PC-9 (cell line): ENCODE measurements at regions of chr16 and their contacts with region 1.

Region 1: GRCh38 chr16:3134564-3135417 is at the start of gene ZNF213:
- DNase-seq: peak; percentile 95 to 97
- H3K4me3 ChIP-seq: peak within 1 kb of the TSS; percentile 88
- H3K27ac ChIP-seq: peak within 1 kb of the TSS; percentile 68
- H3K4me1 ChIP-seq: peaks cover 14% of the 10 kb centered on the region
- H3K27me3 ChIP-seq: no peaks in the 10 kb centered on the region
- CTCF ChIP-seq: no peak
- total RNA-seq, gene ZNF213: 15.9 and 17.7 TPM in 2 replicates

Region 2: DNA sequence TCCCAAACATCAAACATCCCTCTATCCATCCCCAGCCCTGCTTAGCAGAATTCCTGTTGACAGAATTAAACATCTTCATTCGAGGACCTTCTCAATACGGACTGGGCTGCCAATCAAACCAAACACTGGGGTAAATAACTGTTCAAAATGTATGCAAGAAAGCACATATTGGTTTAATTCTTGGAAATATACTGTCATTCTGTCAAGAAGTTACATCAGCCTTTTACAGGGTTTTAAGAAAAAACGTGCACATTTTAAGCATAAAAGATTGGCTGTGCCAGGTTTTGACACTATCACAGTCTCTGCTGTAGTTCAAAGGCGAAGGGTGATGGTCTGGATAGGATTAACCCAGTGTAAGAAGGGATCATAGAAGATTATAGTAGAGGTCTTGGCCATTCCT is 730.7 kb before region 1 on chr16:
- CTCF ChIA-PET with region 1: no interaction called
- POLR2A ChIA-PET with region 1: no interaction called
- intact Hi-C with region 1: no loop called
- DNase-seq: no peak
- H3K4me3 ChIP-seq: no peak overlapping the region
- H3K27ac ChIP-seq: no peak overlapping the region
- H3K4me1 ChIP-seq: no peaks in the 10 kb centered on the region
- H3K27me3 ChIP-seq: 0 out of 2 replicates have a peak, but pooled peaks cover 7% of the 10 kb centered on the region
- CTCF ChIP-seq: no peak

Region 3: GRCh38 chr16:2964475-2965336 is 170.1 kb before region 1 on chr16:
- CTCF ChIA-PET with region 1: no interaction called
- POLR2A ChIA-PET with region 1: no interaction called
- intact Hi-C with region 1: no loop called
- DNase-seq: peak; percentile 66 to 93
- H3K4me3 ChIP-seq: peak overlapping the region; percentile 91
- H3K27ac ChIP-seq: no peak overlapping the region
- H3K4me1 ChIP-seq: peaks cover 5% of the 10 kb centered on the region; the same call in 1 of the 2 replicates
- H3K27me3 ChIP-seq: no peaks in the 10 kb centered on the region
- CTCF ChIP-seq: no peak

Region 4: GRCh38 chr16:3094289-3095027 is 40.3 kb before region 1 on chr16:
- CTCF ChIA-PET with region 1: interaction called, 38 read pairs
- POLR2A ChIA-PET with region 1: interaction called, 22 read pairs
- intact Hi-C with region 1: no loop called
- DNase-seq: peak in 1 of 2 experiments; percentile 31
- H3K4me3 ChIP-seq: no peak overlapping the region
- H3K27ac ChIP-seq: no peak overlapping the region
- H3K4me1 ChIP-seq: peaks cover 5% of the 10 kb centered on the region; the same call in 1 of the 2 replicates
- H3K27me3 ChIP-seq: no peaks in the 10 kb centered on the region
- CTCF ChIP-seq: peak; percentile 74

Region 5: GRCh38 chr16:3150346-3151218 is 15.8 kb after region 1 on chr16:
- CTCF ChIA-PET with region 1: interaction called, 4 read pairs
- POLR2A ChIA-PET with region 1: interaction called, 37 read pairs
- intact Hi-C with region 1: loop called (anchors 1 kb)
- DNase-seq: peak; percentile 91 to 99
- H3K4me3 ChIP-seq: peak overlapping the region; percentile 99
- H3K27ac ChIP-seq: peak overlapping the region; percentile 75
- H3K4me1 ChIP-seq: peaks cover 6% of the 10 kb centered on the region
- H3K27me3 ChIP-seq: no peaks in the 10 kb centered on the region
- CTCF ChIP-seq: no peak

Region 6: DNA sequence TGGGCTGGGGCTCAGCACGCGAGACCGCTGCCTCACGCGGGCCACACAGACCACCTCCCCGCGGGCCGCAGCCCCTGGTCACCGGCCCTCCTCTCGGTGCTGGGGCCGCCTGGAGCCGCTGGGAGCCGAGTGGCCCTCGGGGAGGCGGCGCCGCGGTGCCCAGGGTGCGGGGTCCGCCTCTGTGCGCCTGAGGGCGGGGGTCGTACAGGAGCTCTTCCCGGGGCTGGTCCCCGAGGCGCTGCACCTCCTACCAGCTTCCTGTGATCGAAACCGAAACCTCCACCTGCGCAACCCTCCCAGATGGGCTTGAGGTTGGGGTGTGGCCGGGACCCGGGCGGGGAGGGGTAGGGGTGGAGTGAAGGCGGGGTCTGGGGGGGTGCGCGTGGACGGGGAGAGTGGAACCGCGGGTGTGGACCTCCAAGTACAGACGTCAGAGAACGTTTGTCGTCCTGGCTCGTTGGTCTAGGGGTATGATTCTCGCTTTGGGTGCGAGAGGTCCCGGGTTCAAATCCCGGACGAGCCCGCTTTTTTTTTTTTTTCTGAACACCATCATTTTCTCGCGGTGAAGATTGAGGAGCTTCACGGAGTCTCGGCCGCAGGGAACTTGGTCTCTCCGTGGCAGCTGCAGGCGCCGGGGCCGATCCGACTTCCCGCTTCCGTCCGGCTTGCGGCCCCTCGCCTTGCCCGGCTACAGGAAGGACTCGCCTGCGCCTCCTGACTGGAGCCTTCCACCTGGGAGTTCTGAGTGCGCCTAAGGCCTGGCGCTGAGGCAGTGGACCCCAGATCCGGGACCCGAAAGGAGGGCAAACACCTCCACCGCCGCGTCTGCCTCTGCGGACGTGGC is 23.9 kb after region 1 on chr16:
- CTCF ChIA-PET with region 1: interaction called, 3 read pairs
- POLR2A ChIA-PET with region 1: interaction called, 10 read pairs
- intact Hi-C with region 1: no loop called
- DNase-seq: peak; percentile 82 to 95
- H3K4me3 ChIP-seq: peak overlapping the region; percentile 71
- H3K27ac ChIP-seq: peak overlapping the region; percentile 98
- H3K4me1 ChIP-seq: no peaks in the 10 kb centered on the region
- H3K27me3 ChIP-seq: no peaks in the 10 kb centered on the region
- CTCF ChIP-seq: no peak

Region 7: GRCh38 chr16:3165111-3165822 is 30.5 kb after region 1 on chr16:
- CTCF ChIA-PET with region 1: interaction called, 6 read pairs
- POLR2A ChIA-PET with region 1: interaction called, 10 read pairs
- intact Hi-C with region 1: loop called (anchors 5 kb)
- DNase-seq: no peak
- H3K4me3 ChIP-seq: no peak overlapping the region
- H3K27ac ChIP-seq: no peak overlapping the region
- H3K4me1 ChIP-seq: 0 out of 2 replicates have a peak, but pooled peaks cover 4% of the 10 kb centered on the region
- H3K27me3 ChIP-seq: no peaks in the 10 kb centered on the region
- CTCF ChIP-seq: no peak

Region 8: DNA sequence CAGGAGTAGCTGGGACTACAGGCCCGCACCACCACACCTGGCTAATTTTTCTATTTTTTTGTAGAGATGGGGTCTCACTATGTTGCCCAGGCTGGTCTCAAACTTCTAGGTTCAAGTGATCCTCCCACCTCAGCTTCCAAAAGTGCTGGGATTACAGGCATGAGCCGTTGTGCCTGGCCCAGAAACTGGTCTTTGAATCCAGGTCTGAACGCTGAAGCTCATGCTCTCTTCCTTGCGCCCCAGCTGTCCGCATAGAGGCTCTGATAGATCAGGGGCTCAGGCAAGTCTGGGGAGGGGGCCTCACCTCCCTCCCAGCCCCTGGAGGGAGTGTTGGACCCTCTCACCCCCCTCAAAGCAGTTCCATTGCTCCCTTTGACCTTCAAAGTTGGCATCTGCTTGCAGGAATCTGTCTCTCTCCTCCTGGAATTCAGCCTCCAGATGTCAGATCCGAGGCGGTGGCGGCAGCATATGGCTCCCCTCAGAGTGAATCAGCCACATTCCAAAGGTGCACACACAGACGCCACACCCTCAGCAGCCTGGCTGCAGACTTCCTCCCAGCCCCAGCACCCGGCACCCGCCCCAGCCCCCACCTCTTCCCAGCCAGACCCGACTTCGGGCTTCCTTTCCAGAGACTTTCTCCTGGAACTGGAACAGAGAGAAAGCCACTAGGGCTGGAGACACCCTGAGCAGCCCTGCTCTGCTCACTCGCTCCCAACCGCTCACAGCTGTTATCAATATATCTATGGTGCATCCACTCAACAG is 1164.2 kb after region 1 on chr16:
- CTCF ChIA-PET with region 1: no interaction called
- POLR2A ChIA-PET with region 1: interaction called, 18 read pairs
- intact Hi-C with region 1: no loop called
- DNase-seq: peak; percentile 91 to 96
- H3K4me3 ChIP-seq: peak overlapping the region; percentile 15; the same call in 1 of the 2 replicates
- H3K27ac ChIP-seq: peak overlapping the region; percentile 73
- H3K4me1 ChIP-seq: peaks cover 33% of the 10 kb centered on the region
- H3K27me3 ChIP-seq: no peaks in the 10 kb centered on the region
- CTCF ChIP-seq: no peak